Right lobe of liver (tissue), 6 donors: ENCODE measurements at regions of chr19 and their contacts with region 1.

Region 1: GRCh38 chr19:10870955-10871603 is at the start of gene CARM1:
- DNase-seq: peak; percentile 100
- ATAC-seq: peak; percentile 88 to 96 (median 93)
- H3K4me3 ChIP-seq: peak within 1 kb of the TSS; percentile 65 to 74 (median 67)
- H3K27ac ChIP-seq: peak within 1 kb of the TSS in 2 of 3 donors; percentile 51 to 67
- H3K4me1 ChIP-seq: peaks cover 0 to 8% (median 0%) of the 10 kb centered on the region in 4 donors
- H3K27me3 ChIP-seq: no peaks in the 10 kb centered on the region
- CTCF ChIP-seq: peak; percentile 51 to 97 (median 68)
- POLR2A ChIP-seq: no peak
- total RNA-seq, gene CARM1: 13.7 to 20.5 (median 17.5) TPM

Region 2: GRCh38 chr19:10921199-10921879 is 50.3 kb after region 1 on chr19:
- intact Hi-C with region 1: loop called (anchors 5 to 10 kb)
- DNase-seq: no peak
- ATAC-seq: peak in 1 of 4 donors; percentile 3
- H3K4me3 ChIP-seq: no peak overlapping the region
- H3K27ac ChIP-seq: no peak overlapping the region
- H3K4me1 ChIP-seq: no peaks in the 10 kb centered on the region
- H3K27me3 ChIP-seq: no peaks in the 10 kb centered on the region
- CTCF ChIP-seq: no peak
- POLR2A ChIP-seq: no peak

Region 3: DNA sequence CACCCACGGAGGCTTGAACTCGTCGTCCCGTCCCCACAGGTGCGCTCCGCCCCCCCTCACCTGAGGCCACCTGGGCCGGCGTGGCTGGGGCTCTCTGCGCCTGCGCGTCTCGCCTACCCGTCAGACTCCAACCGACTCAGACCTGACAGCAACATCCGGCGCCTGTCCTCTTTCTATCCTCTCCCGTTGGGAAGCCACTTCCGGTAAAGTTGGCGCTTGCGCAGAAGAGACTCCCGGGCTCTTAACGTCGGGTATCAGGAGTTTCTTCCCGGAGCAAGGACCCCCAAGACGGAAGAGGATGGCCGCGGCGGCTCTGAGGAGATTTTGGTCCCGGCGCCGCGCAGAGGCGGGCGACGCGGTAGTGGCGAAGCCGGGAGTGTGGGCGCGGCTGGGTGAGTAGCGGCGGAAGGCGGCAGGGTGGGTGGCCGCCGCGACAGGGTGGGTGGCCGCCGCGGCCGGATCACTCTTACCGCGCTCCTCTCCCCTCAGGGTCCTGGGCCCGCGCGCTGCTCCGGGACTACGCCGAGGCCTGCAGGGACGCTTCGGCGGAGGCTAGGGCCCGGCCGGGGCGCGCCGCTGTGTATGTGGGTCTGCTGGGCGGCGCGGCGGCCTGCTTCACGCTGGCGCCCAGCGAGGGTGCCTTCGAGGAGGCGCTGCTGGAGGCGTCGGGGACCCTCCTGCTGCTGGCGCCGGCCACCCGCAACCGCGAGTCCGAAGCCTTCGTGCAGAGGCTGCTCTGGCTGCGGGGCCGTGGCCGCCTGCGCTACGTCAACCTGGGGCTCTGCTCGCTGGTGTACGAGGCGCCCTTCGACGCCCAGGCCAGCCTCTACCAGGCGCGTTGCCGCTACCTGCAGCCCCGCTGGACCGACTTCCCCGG is 57.7 kb after region 1 on chr19 and contains the starts of genes TIMM29 and YIPF2:
- intact Hi-C with region 1: loop called (anchors 5 to 10 kb)
- DNase-seq: peak; percentile 96 to 98 (median 98)
- ATAC-seq: peak; percentile 93 to 96 (median 94)
- H3K4me3 ChIP-seq: peak within 1 kb of the TSS; percentile 96 to 100 (median 98)
- H3K27ac ChIP-seq: peak within 1 kb of the TSS; percentile 53 to 78 (median 75)
- H3K4me1 ChIP-seq: peaks cover 0 to 18% (median 5%) of the 10 kb centered on the region in 4 donors
- H3K27me3 ChIP-seq: no peaks in the 10 kb centered on the region
- CTCF ChIP-seq: no peak
- POLR2A ChIP-seq: peak; percentile 66
- total RNA-seq, gene TIMM29: 10.2 to 15.7 (median 11.6) TPM
- total RNA-seq, gene YIPF2: 23.5 to 46.1 (median 31.4) TPM